ENCODE measurements at regions of chr10 and their contacts with region 1.

Region 1: GRCh38 chr10:1674501-1674900 is 62.8 kb downstream of the ADARB2 start:
- DNase-seq: no peak
- ATAC-seq: no peak

Region 2: DNA sequence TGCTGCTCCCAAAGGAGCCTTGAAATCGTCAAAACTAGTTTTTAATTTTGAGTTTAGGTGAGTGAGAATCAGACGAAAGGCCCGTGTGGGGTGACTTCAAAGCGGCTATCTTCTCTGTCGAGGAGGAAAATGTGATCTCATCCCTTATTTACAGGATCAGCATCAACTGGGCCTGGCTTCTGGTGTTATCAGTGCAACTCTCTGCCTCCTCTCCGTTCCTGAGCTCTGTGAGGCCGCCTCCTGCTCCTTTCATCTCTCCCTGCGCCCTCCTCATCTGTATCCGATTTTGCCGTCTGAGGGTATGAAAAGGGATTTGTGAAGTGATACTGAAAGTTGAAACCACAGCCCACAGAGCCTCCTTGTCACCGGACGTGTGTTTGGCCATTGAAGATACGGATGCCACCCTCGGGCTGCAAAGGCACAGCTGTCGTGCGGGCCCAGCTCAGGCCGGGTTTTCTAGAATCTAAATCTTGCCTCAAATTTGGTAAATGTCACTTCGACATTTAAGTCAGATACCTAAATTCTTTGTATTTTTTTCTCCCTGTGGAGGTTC is 471.5 kb after region 1 on chr10:
- intact Hi-C with region 1: loop called (anchors 5 kb)
- DNase-seq: no peak
- ATAC-seq: no peak